ENCODE measurements at regions of chr1 and their contacts with region 1.

Region 1: GRCh38 chr1:3564921-3565827 is 46.1 kb downstream of the MEGF6 start:
- DNase-seq: no peak
- ATAC-seq: peak; percentile 57

Region 2: DNA sequence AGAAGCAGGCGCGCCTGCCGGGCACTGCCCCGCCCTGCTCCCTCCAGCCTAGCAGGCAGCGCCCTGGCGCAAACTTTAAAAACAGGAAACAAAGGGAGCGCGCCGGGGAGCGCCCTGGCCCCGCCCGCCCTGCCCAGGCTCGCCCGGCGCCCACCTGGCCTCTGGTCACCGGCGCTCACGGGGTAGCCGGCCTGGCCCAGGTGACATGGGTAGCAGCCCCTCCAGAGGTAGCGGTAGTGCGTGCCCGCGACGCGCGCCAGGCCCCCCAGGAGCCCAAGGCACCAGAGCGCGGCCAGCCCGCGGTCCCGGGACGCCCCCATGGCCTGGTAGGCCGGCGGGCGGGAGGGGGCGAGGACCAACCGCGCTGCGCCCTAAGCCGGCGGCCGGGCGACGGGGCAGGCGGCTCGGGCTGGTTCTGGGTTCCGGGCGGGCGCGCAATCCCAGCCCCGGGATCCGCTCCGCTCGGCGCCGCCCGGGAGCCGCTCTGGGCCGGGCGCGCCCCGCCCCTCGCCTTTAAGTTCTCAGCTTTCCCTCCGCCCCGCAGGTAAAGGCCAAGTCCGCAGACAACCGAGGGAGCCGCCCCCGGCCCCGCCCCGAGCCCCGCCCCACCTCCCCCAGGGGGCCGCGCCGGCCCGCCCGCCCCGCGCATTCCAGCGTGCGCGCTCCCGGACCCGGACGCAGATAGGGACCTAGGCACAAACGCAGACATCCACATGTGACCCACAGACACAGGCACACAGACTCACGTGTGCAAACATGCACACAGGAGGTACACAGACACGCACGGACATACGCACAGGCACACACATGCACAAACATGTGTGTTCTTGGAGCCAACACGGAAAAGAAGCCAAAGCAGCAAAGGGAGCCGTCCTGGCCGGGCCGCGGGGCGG is 34.0 kb before region 1 on chr1:
- intact Hi-C with region 1: no loop called
- DNase-seq: peak; percentile 90
- ATAC-seq: peak; percentile 79

Region 3: GRCh38 chr1:3610527-3611169 is 45.5 kb after region 1 on chr1:
- intact Hi-C with region 1: no loop called
- DNase-seq: no peak
- ATAC-seq: no peak

Region 4: GRCh38 chr1:3727042-3727824 is 162.1 kb after region 1 on chr1:
- intact Hi-C with region 1: loop called (anchors 10 kb)
- DNase-seq: no peak
- ATAC-seq: no peak

Region 5: DNA sequence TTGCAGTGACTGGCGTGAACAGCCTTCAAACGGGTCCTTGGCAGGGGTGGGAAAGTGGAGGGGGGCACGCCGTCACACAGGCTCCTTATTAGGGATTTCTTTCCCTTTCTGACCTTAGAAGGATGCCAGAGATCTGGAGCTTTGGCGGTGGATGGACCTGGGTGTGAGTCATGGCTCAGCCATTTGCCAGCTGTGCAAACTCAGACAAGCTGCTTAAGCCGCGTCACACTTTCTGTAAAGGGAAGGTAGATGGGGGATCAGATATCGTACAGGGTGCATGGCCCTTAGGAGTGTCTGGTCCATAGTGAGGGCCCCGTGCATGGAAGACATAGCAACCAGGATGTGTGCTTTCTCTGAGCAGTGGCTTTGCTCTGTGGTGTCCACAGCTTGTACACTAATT is 383.2 kb after region 1 on chr1:
- intact Hi-C with region 1: no loop called
- DNase-seq: no peak
- ATAC-seq: no peak